OCI-LY7 (cell line): ENCODE measurements at regions of chr10 and their contacts with region 1.

Region 1: DNA sequence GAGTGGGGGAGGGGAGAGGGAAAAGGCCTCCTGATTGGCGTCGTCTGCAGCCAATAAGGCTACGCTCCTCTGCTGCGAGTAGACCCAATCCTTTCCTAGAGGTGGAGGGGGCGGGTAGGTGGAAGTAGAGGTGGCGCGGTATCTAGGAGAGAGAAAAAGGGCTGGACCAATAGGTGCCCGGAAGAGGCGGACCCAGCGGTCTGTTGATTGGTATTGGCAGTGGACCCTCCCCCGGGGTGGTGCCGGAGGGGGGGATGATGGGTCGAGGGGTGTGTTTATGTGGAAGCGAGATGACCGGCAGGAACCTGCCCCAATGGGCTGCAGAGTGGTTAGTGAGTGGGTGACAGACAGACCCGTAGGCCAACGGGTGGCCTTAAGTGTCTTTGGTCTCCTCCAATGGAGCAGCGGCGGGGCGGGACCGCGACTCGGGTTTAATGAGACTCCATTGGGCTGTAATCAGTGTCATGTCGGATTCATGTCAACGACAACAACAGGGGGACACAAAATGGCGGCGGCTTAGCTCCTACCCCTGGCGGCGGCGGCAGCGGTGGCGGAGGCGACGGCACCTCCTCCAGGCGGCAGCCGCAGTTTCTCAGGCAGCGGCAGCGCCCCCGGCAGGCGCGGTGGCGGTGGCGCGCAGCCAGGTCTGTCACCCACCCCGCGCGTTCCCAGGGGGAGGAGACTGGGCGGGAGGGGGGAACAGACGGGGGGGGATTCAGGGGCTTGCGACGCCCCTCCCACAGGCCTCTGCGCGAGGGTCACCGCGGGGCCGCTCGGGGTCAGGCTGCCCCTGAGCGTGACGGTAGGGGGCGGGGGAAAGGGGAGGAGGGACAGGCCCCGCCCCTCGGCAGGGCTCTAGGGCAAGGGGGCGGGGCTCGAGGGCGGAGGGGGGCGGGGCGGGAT is at the start of gene KAT6B:
- DNase-seq: peak; percentile 100
- H3K4me3 ChIP-seq: peak within 1 kb of the TSS; percentile 81
- H3K27ac ChIP-seq: peak within 1 kb of the TSS; percentile 83
- H3K4me1 ChIP-seq: peaks cover 23% of the 10 kb centered on the region
- CTCF ChIP-seq: peak; percentile 53
- total RNA-seq, gene KAT6B: 20.8 and 20.9 TPM in 2 replicates

Region 2: DNA sequence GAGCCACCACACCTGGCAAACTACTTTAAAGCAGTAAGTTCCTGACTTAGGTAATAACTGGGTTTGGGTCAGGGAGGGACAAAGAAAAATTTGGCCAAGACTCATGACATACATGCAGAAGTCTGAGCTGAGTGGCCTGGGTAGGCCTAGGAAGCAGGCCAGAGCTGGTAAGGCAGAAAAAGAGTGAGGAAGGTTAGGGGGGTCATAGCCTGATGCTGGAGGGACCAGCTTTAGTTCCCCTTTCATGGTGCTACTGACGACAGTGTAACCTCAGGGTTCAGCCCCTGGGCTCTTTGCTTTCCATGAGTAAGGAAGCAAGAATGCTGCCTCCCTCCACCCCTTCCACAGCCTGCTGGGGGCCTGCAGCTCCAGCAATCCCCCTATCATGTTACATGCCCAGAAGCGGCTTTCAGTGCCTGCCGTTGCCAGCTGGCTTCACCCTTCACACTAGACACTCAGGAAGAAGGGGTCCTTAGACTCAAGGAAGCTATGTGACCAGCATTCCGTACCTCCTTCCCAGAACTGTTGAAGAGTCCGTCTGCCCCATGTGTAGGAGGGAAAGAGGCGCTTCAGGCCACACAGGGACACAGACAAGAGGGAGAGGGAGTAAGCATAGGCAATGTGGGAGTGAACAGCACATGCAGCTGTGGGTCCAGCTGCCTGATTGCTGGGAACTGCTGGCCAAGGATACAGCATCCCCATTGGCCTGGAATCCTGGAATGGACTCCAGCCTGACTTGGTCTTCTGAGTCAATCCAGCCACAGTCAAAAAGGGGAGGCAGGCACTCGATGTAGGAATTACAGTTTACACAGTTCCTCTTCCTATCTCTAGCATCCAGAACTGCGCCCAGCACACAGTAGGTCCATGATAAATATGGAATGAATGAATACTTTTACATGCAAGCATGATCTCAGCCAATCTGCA is 919.6 kb before region 1 on chr10:
- CTCF ChIA-PET with region 1: no interaction called
- POLR2A ChIA-PET with region 1: no interaction called
- intact Hi-C with region 1: no loop called
- DNase-seq: no peak
- H3K4me3 ChIP-seq: no peak overlapping the region
- H3K27ac ChIP-seq: no peak overlapping the region
- H3K4me1 ChIP-seq: peaks cover 43% of the 10 kb centered on the region
- CTCF ChIP-seq: no peak

Region 3: DNA sequence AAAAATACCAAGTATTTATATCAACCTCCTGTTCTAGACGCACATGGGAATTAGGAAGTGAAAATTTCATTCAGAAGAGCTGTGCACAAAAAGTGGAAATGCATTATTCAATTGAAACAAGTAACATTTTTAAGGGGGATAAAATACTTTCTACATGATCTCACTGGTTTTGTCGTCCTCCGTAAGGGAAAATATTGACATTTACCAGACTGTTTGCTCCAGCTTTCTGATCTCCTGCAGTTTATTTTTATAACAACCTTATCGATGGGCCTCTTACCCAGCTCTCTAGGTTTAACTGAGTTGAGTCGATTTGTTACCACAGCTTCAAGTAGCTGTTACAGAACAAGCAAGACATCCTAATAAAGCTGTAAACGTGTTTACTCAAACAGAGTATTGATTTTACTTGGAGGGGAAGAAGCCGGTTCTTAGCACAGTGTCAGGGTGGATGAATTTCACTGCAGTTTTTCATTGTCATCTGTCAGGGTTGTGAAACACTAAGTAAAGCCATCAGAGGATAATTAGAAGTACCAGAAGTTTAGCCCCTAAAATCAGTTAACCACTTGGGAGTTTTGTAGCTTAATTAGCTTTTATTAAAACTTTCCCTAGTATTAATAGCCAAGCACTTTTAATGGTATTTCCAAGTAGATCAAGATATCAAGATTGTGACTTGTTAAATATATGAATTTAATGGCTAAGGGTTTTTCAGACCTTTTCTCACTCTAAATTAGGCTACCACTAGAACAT is 142.6 kb before region 1 on chr10:
- CTCF ChIA-PET with region 1: interaction called, 14 read pairs
- POLR2A ChIA-PET with region 1: no interaction called
- intact Hi-C with region 1: no loop called
- DNase-seq: no peak
- H3K4me3 ChIP-seq: no peak overlapping the region
- H3K27ac ChIP-seq: no peak overlapping the region
- H3K4me1 ChIP-seq: peaks cover 14% of the 10 kb centered on the region
- CTCF ChIP-seq: no peak

Region 4: DNA sequence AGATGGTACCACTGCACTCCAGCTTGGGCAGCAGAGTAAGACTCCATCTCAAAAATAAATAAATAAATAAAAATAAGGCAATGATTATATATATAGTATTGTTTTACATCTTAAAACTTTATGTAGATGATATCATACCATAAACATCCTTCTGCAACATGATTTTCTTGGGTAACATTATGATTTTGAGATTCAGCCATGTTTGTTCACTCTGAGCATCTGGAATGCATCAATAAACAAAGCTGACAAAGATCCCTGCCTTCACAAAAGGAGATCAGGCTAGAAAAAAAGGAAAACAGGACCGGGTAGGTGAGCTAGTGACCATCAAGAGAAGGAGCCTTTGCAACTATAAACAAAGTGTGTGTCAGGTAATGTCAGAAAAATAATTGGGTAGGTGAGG is 31.9 kb before region 1 on chr10:
- CTCF ChIA-PET with region 1: interaction called, 8 read pairs
- POLR2A ChIA-PET with region 1: interaction called, 4 read pairs
- intact Hi-C with region 1: loop called (anchors 2 kb)
- DNase-seq: no peak
- H3K4me3 ChIP-seq: no peak overlapping the region
- H3K27ac ChIP-seq: no peak overlapping the region
- H3K4me1 ChIP-seq: peaks cover 43% of the 10 kb centered on the region
- CTCF ChIP-seq: no peak

Region 5: GRCh38 chr10:75019370-75019769 is 193.0 kb after region 1 on chr10:
- CTCF ChIA-PET with region 1: no interaction called
- POLR2A ChIA-PET with region 1: interaction called, 3 read pairs
- intact Hi-C with region 1: loop called (anchors 10 kb)
- DNase-seq: peak; percentile 48
- H3K4me3 ChIP-seq: no peak overlapping the region
- H3K27ac ChIP-seq: no peak overlapping the region
- H3K4me1 ChIP-seq: no peaks in the 10 kb centered on the region
- CTCF ChIP-seq: peak; percentile 82

Region 6: GRCh38 chr10:75235375-75236177 is 409.2 kb after region 1 on chr10 and contains the start of gene COMTD1:
- CTCF ChIA-PET with region 1: no interaction called
- POLR2A ChIA-PET with region 1: no interaction called
- intact Hi-C with region 1: loop called (anchors 1 kb)
- DNase-seq: peak; percentile 95
- H3K4me3 ChIP-seq: peak within 1 kb of the TSS; percentile 80
- H3K27ac ChIP-seq: peak within 1 kb of the TSS; percentile 77
- H3K4me1 ChIP-seq: peaks cover 19% of the 10 kb centered on the region
- CTCF ChIP-seq: peak; percentile 99
- total RNA-seq, gene COMTD1: 20.7 and 37.7 TPM in 2 replicates